Posterior cingulate gyrus (tissue), 11 donors: ENCODE measurements at regions of chr4 and their contacts with region 1.

Region 1: DNA sequence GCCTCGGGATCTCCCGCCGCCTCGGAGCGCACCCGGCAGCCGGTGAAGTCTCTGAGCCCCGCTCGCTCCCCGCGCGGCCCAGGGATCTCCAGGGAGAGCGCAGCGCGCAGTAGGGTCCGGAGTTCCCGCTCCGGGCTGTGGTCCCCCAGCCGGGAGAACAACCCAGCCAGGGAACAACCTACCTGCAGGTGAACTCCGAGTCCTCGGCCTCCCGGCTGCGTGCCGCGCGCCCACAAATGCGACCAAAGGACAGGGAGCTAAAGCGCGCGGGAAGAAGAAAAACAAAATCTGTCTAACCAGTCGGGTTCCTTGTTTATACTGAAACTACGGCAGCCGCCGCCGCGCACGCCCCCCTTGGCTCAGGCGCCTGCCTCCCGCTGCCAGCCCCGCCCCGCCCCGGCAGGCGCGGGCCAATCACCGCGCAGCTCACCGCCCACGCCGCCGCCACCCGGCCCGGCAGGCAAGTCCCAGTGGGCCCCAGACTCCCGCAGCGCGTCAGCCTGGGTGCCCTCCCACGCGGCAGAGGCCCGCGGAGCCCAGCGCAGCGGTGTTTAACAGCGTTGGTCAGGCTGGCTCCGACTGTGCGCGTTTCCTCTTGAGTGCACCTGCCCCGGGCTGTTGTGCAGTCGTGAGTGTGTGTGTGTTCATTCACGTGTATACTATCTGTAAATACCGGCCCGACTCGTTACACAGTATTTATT is at the start of gene RASGEF1B:
- DNase-seq: peak; percentile 83 to 99 (median 88)

Region 2: DNA sequence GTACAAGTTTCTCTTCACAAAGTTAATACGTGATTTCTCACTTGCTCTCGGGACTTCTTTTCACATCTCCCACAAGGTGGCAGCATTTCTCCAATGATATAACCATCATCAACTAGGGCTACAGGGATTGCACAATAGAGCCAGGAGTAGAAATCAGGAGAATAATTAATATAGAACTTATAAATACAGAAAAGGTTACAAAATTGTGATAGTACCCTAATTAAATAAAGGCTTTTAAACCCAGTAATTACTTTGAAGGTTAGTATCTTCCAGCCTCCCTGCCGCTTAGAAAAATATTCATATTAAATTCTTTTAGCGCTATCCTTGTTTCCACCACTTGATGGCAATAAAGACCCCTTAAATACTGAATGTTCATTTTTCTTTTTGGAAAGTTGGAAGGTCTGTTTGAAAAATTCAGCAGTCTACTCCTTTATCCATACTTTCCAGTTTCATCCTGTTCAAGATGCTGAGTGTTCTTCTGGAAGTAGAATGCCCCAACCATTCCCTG is 65.8 kb before region 1 on chr4:
- intact Hi-C with region 1: loop called (anchors 1 kb)
- DNase-seq: peak in 3 of 10 donors; percentile 44 to 64 (median 48)

Region 3: GRCh38 chr4:81516241-81516640 is 44.5 kb after region 1 on chr4:
- intact Hi-C with region 1: loop called (anchors 5 kb)
- DNase-seq: peak in 1 of 10 donors; percentile 27

Region 4: GRCh38 chr4:81688085-81688484 is 216.3 kb after region 1 on chr4:
- intact Hi-C with region 1: loop called (anchors 10 kb)
- DNase-seq: peak in 2 of 10 donors; percentile 19 to 28

Region 5: GRCh38 chr4:81844717-81845116 is 373.0 kb after region 1 on chr4:
- intact Hi-C with region 1: loop called (anchors 1 kb)
- DNase-seq: peak in 7 of 10 donors; percentile 36 to 82 (median 71)